ENCODE measurements at regions of chr17 and their contacts with region 1.

Region 1: GRCh38 chr17:49677933-49678847 is at the start of gene SPOP:
- DNase-seq: peak; percentile 99
- total RNA-seq, gene SPOP: 68.3 TPM

Region 2: GRCh38 chr17:49575579-49576087 is 102.6 kb before region 1 on chr17 and contains the start of gene NXPH3:
- intact Hi-C with region 1: loop called (anchors 5 kb)
- DNase-seq: peak; percentile 88
- total RNA-seq, gene NXPH3: 4.4 TPM

Region 3: GRCh38 chr17:49616601-49617131 is 61.5 kb before region 1 on chr17:
- intact Hi-C with region 1: loop called (anchors 5 kb)
- DNase-seq: peak; percentile 80

Region 4: DNA sequence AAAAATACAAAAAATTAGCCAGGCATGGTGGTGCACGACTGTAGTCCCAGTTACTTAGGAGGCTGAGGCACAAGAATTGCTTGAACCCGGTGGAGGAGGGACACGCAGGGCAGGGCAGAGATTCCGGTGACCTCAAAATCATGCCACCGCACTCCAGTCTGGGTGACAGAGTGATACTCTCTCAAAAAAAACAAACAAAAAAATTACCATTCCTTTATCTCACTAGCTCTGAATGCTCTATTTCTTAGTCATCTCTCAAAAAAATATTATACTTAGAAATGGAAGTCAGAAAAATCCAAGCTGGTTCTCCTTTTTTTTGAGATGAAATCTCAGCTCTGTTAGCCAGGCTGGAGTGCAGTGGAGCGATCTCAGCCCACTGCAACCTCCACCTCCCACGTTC is 41.1 kb before region 1 on chr17:
- intact Hi-C with region 1: loop called (anchors 5 kb)
- DNase-seq: no peak

Region 5: GRCh38 chr17:49723423-49723822 is 45.2 kb after region 1 on chr17:
- intact Hi-C with region 1: no loop called
- DNase-seq: no peak

Region 6: GRCh38 chr17:49880291-49881053 is 202.3 kb after region 1 on chr17:
- intact Hi-C with region 1: no loop called
- DNase-seq: peak; percentile 82